HepG2 (cell line): ENCODE measurements at regions of chr1 and their contacts with region 1.

Region 1: DNA sequence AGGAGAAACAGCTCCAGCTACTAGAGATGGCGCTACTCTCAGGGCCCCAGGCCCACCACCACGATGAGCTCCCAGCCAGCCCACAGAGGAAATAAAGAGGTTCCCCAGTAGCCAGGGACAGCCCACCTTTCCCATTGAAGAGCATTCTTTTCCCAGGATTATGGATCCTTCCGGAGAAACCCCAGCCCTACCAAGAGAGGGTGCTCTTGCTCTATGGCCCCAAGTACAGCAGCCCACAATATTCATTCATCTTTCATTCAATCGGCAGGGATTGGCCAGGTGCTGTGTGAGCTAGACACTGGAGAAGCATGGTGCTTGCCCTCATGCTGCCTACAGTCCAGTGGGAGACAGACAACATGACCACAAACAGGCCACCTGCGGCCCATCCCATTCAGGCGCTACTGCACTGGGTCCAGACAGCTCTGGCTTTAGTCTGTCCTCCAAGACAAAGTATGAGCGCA is 29.9 kb downstream of the PMVK start:
- DNase-seq: peak; percentile 52
- ATAC-seq: peak; percentile 88
- H3K4me3 ChIP-seq: no peak overlapping the region
- H3K27ac ChIP-seq: no peak overlapping the region
- H3K4me1 ChIP-seq: peaks cover 20% of the 10 kb centered on the region
- H3K27me3 ChIP-seq: no peaks in the 10 kb centered on the region
- CTCF ChIP-seq: peak; percentile 94
- EP300 ChIP-seq: no peak
- POLR2A ChIP-seq: no peak
- RAD21 ChIP-seq: peak; percentile 86

Region 2: DNA sequence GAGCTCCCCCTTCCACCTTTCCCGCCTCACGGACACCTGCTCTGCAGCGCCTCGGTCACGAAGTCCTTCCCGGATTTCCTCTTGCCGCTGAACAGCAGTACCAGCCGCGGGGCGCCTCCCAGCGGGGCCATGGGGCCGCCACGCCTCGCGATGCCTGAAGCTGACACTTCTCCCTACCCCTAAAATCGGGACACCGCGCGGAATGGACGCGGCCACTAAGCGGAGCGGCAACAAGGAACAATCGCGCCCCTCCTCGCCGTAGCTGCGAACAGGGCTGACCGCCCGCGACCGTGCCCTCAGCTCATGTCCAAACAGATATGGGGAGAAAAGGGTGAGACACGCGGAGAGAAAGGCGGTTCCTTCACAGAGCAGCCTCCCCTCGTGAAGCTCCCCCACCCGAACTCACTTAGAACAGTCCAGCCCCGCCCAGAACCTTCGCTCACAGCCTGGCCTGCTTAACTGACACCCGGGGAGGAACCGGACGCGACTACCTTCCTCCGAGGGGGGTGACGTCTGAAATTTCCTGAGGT is 30.0 kb after region 1 on chr1 and contains the start of gene PMVK:
- CTCF ChIA-PET with region 1: interaction called, 6 read pairs
- POLR2A ChIA-PET with region 1: interaction called, 9 read pairs
- in situ Hi-C with region 1: no loop called
- intact Hi-C with region 1: loop called (anchors 2 kb)
- DNase-seq: peak; percentile 88
- ATAC-seq: peak; percentile 69
- H3K4me3 ChIP-seq: peak within 1 kb of the TSS; percentile 57 to 77 (median 69)
- H3K27ac ChIP-seq: peak within 1 kb of the TSS; percentile 99
- H3K4me1 ChIP-seq: peaks cover 74% of the 10 kb centered on the region
- H3K27me3 ChIP-seq: no peaks in the 10 kb centered on the region
- CTCF ChIP-seq: peak; percentile 96
- EP300 ChIP-seq: no peak
- POLR2A ChIP-seq: peak; percentile 67 to 77
- RAD21 ChIP-seq: peak; percentile 68
- total RNA-seq, gene PMVK: 3.9 and 7.5 TPM in 2 replicates

Region 3: DNA sequence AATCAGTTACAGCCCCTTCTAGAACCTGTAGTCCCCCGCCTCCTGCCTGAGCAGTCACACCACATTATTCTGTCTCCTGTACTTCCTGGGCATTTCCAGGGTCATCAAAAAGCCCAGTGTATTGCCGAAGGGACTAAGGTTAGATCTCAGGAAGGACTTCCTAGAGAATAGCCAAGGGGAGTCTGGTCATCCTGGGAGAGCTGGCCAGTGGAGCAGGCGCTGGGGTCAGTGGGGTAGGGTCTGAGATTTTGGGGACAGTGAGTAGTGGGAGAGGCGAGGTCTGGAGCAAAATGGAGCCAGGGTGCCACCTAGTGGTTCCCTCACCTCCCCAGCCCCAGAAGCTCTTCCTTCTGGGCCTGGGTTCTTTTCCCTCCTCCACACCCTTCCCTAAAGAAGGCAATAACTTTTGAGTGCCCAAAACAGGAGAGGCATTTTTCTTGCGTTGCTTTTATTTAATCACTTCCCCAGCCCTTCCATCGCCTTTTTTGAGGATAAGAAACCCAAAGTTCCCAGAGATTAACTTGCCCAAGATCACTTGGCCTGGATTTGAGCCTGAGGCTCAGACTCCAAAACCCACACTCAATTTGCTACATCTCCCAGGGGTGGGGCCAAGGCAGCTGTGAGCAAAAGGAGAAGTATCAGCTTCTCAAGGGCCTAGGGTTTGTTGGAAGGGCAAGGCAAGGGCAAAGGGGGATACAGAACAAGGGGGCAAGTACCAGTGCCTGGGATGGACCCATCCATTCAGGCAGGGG is 37.2 kb after region 1 on chr1:
- CTCF ChIA-PET with region 1: no interaction called
- POLR2A ChIA-PET with region 1: interaction called, 5 read pairs
- in situ Hi-C with region 1: no loop called
- intact Hi-C with region 1: loop called (anchors 1 kb)
- DNase-seq: no peak
- ATAC-seq: peak; percentile 14; the same call in 1 of the 3 replicates
- H3K4me3 ChIP-seq: peak overlapping the region in 1 of 3 experiments; percentile 27; a peak in 2 of 6 replicates
- H3K27ac ChIP-seq: peak overlapping the region; percentile 88
- H3K4me1 ChIP-seq: peaks cover 71% of the 10 kb centered on the region
- H3K27me3 ChIP-seq: no peaks in the 10 kb centered on the region
- CTCF ChIP-seq: peak; percentile 85
- EP300 ChIP-seq: no peak
- POLR2A ChIP-seq: no peak
- RAD21 ChIP-seq: peak; percentile 76

Region 4: GRCh38 chr1:155044812-155045690 is 138.4 kb after region 1 on chr1:
- CTCF ChIA-PET with region 1: interaction called, 4 read pairs
- POLR2A ChIA-PET with region 1: no interaction called
- in situ Hi-C with region 1: no loop called
- intact Hi-C with region 1: loop called (anchors 5 kb)
- DNase-seq: peak; percentile 79
- ATAC-seq: peak; percentile 85
- H3K4me3 ChIP-seq: peak overlapping the region in 1 of 3 experiments; percentile 8; a peak in 1 of 6 replicates
- H3K27ac ChIP-seq: no peak overlapping the region
- H3K4me1 ChIP-seq: peaks cover 69% of the 10 kb centered on the region
- H3K27me3 ChIP-seq: peaks cover 7 to 21% of the 10 kb centered on the region in 2 experiments
- CTCF ChIP-seq: peak; percentile 89
- EP300 ChIP-seq: no peak
- POLR2A ChIP-seq: no peak
- RAD21 ChIP-seq: peak; percentile 81

Region 5: DNA sequence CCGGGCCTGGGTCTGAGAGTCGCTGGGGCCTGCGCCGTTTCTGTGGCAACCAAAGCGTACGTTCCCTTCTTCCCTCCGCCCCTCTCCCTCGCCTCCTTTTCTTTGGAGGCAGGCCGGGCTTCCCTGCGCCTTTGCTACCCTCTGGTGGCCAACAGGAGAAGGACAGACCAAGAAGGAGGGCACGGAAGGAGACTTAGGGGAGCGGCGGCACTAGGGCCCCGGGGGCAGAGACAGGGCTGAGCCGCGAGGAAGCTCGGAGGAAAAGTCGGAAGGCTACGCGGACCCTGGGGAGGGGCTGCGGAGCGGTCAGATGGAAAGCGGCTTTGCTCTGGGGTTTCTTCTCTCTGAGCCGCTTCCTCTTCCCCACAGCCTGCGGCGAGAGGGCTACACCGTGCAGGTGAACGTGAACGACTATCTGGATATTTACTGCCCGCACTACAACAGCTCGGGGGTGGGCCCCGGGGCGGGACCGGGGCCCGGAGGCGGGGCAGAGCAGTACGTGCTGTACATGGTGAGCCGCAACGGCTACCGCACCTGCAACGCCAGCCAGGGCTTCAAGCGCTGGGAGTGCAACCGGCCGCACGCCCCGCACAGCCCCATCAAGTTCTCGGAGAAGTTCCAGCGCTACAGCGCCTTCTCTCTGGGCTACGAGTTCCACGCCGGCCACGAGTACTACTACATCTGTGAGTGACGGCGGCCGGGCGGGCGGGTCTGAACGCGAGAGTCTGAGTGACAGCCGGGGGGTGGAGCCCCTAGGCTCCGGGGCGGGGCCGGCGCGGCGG is 178.3 kb after region 1 on chr1:
- CTCF ChIA-PET with region 1: no interaction called
- POLR2A ChIA-PET with region 1: no interaction called
- in situ Hi-C with region 1: no loop called
- intact Hi-C with region 1: loop called (anchors 10 kb)
- DNase-seq: peak; percentile 82
- ATAC-seq: peak; percentile 82
- H3K4me3 ChIP-seq: peak overlapping the region; percentile 72 to 89 (median 75)
- H3K27ac ChIP-seq: peak overlapping the region; percentile 74
- H3K4me1 ChIP-seq: peaks cover 83% of the 10 kb centered on the region
- H3K27me3 ChIP-seq: peaks cover 22 to 44% of the 10 kb centered on the region in 2 experiments
- CTCF ChIP-seq: peak; percentile 99
- EP300 ChIP-seq: no peak
- POLR2A ChIP-seq: no peak
- RAD21 ChIP-seq: peak; percentile 94